PC-9 (cell line): ENCODE measurements at regions of chr9 and their contacts with region 1.

Region 1: GRCh38 chr9:35051069-35051967 is 21.1 kb downstream of the VCP start:
- DNase-seq: peak in 1 of 2 experiments; percentile 25
- H3K4me3 ChIP-seq: no peak overlapping the region
- H3K27ac ChIP-seq: no peak overlapping the region
- H3K4me1 ChIP-seq: no peaks in the 10 kb centered on the region
- H3K27me3 ChIP-seq: no peaks in the 10 kb centered on the region
- CTCF ChIP-seq: peak; percentile 73

Region 2: DNA sequence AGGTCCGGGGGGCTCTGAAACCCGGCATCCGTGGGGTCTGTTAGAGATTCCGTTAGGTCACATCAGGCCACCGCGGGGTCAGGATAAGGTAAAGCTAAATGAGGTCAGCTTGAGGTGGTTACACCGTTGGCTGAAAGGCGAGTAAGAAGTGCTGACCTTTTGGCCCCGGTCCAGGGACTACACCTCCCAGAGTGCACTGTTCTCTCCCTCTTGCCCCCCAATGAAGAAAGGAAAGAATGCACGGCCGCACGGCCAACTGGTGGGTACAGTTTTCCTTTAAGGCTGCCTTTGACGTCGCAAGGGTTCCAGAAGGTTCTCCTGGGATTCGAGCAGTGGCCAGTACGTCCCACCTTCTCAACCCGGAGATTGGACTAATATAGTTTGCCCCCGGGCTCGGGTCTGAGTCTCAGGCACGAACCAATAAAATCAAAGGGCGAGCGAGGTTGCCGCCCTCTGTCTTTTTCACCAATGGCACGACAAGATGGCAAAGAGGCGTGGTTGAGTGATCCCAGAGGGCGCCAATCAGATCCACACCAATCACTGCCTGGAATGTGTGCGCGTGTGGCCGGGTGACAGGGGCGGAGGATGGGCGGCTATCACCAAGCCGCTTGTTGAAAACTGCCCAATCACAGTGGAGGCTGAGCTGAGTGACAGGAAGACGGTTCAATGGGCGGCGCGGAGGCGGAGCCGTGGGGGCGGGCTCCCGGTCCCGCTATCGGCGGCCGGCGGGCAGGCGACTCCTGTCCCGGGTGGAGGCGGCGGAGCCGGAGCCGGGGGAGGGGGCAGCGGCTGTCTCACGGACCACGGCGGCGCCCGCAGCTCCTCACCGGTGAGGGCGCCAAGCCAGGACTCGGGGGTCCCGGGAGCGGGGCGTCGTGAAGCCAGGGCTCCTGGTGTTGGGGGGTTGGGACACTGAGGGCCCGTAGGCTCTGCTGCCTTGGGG is 62.0 kb before region 1 on chr9 and contains the start of gene DNAJB5:
- CTCF ChIA-PET with region 1: no interaction called
- POLR2A ChIA-PET with region 1: no interaction called
- intact Hi-C with region 1: loop called (anchors 2 kb)
- DNase-seq: peak; percentile 84 to 92
- H3K4me3 ChIP-seq: peak within 1 kb of the TSS; percentile 57
- H3K27ac ChIP-seq: no peak within 1 kb of the TSS
- H3K4me1 ChIP-seq: peaks cover 7% of the 10 kb centered on the region; the same call in 1 of the 2 replicates
- H3K27me3 ChIP-seq: no peaks in the 10 kb centered on the region
- CTCF ChIP-seq: no peak
- total RNA-seq, gene DNAJB5: 0.79 and 0.98 TPM in 2 replicates

Region 3: DNA sequence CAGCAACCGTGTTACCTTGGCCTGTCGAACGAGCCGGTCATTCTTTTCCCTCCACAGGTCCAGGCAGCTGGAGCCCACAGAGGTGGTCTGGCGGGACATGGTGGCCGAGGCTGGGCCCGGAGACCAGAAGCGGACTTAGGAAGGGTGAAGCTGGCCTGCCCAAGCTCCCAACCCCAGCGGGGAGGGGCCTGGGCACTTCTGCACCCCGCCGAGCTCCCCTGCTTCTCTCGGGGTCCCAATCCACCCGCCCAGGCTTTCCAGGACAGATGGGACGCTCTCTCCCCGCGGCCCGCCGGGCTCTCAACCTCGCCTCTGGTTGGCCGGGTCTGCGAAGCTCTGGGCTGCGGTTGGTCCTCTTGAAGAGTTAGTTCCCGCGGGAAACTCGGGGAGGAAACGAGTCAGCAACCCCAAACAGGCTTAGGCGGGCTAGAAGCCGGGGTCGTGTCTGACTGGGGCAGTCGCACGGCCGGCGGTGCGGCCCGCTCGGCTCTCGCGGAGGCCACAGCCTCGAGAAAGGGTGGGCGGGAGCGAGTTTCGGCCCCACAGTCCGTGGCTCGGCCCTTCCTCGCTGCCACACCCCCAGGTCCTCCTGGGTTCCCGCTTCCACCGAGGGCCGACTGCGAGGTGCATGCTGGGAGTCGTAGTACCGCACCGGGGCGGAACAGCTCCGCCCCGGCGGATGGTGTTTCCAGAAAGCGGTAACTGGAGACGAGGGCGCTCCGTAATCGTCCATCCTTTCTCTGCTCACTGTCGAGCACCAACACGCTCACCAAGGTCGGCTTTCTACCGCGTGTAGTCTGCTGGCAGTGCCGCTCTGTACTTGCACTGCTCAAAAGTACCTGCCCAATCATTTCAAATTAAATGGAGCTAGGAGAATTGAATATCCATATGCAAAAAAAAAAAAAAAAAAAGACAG is 28.4 kb after region 1 on chr9 and contains the start of gene FANCG:
- CTCF ChIA-PET with region 1: no interaction called
- POLR2A ChIA-PET with region 1: no interaction called
- intact Hi-C with region 1: no loop called
- DNase-seq: peak; percentile 77 to 80
- H3K4me3 ChIP-seq: peak within 1 kb of the TSS; percentile 84
- H3K27ac ChIP-seq: peak within 1 kb of the TSS; percentile 62
- H3K4me1 ChIP-seq: no peaks in the 10 kb centered on the region
- H3K27me3 ChIP-seq: no peaks in the 10 kb centered on the region
- CTCF ChIP-seq: no peak
- total RNA-seq, gene FANCG: 45.3 and 48.7 TPM in 2 replicates

Region 4: DNA sequence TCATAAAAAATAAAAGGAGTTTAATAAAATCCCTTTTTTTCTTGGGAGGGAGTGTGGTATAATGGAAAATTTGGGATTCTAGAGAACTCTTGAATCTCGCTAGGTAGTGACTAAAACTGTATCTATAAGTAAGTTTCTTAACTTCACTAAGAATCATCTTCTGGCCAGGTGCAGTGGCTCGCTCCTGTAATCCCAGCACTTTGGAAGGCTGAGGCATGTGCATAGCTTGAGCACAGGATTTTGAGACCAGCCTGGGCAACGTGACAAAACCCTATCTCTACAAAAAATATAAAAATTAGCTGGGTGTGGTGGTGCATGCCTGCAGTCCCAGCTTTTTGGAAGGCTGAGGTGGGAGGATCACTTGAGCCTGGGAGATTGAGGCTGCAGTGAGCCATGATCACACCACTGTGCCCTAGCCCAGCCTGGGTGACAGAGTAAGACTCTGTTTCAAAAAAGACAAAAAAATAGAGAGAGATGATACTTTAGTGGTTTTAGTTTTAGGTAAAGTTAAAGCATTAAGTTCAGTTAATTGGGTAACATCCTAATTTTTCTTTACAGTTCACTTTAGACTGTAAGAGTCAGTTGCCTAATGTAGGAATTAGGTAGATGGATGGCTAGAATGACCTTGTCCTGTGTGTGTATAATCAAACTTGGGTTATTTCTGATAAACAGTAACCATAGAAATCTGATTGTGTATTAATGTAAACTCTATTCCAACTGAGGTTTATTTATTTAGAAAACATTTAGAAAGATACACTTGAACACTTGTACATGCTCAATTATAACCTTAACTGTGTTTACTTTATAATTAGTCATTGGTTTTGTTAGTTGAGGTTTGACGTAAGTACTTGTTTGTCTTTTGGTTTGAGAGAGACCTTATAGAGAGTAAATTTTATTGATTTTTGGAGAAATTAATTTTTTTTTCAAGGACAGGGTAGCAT is 128.3 kb after region 1 on chr9:
- CTCF ChIA-PET with region 1: interaction called, 11 read pairs
- POLR2A ChIA-PET with region 1: no interaction called
- intact Hi-C with region 1: no loop called
- DNase-seq: no peak
- H3K4me3 ChIP-seq: no peak overlapping the region
- H3K27ac ChIP-seq: no peak overlapping the region
- H3K4me1 ChIP-seq: no peaks in the 10 kb centered on the region
- H3K27me3 ChIP-seq: no peaks in the 10 kb centered on the region
- CTCF ChIP-seq: no peak

Region 5: DNA sequence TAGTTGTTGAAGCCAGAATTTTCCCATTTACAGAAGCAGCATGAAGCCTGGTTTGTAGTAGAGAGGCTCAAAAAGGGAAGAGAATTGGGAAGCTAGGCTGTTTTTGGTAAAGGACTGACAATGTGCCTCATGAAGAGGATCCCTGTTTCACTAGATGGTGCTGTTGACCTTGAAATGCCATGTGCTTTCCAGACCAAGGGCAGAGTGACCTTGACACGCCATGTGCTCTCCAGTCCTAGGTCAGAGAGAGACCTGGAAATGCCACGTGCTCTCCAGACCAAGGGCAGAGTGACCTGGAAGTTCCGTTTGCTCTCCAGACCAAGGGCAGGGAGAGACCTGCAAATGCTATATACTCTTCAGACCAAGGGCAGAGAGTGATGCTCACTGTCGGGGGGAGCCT is 142.4 kb after region 1 on chr9:
- CTCF ChIA-PET with region 1: no interaction called
- POLR2A ChIA-PET with region 1: no interaction called
- intact Hi-C with region 1: no loop called
- DNase-seq: no peak
- H3K4me3 ChIP-seq: no peak overlapping the region
- H3K27ac ChIP-seq: no peak overlapping the region
- H3K4me1 ChIP-seq: no peaks in the 10 kb centered on the region
- H3K27me3 ChIP-seq: no peaks in the 10 kb centered on the region
- CTCF ChIP-seq: no peak

Region 6: DNA sequence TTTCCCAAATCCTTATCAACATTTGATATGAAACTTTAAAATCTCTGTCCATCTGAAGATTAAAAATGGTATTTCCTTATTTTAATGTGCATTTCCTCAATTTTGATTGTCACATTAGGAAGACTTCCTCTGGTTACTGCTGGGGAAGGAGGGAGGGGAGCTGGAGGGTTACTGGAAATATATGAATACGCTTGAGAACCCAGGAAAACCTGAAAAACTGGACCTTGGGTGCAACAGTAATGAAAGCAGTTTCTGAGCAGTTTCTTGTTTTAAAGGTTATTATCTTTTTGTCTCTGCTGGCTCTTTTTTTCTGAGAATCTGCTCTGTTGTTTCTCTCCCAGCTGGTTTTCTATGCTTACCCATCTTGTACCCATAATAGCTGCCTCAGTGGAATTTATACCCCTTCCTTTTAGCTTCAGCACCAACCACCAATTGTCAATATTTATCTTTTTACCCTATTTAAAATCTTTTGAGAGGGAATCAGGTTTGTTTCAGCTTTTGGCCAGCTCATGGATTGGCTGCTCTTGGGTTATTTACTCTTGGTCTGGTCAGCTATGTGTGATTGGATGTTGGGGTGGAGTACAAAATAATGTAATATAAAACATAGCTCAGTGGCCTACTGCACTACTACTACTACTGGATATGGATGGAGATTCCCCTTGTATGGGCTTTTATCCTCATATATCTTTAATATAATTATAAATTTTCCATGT is 177.9 kb after region 1 on chr9:
- CTCF ChIA-PET with region 1: no interaction called
- POLR2A ChIA-PET with region 1: no interaction called
- intact Hi-C with region 1: no loop called
- DNase-seq: no peak
- H3K4me3 ChIP-seq: no peak overlapping the region
- H3K27ac ChIP-seq: no peak overlapping the region
- H3K4me1 ChIP-seq: no peaks in the 10 kb centered on the region
- H3K27me3 ChIP-seq: no peaks in the 10 kb centered on the region
- CTCF ChIP-seq: no peak